GM12878 (cell line): ENCODE measurements at regions of chr1 and their contacts with region 1.

Region 1: GRCh38 chr1:40979233-40980067 is at the start of gene CTPS1:
- DNase-seq: peak; percentile 59
- ATAC-seq: peak; percentile 94
- H3K4me3 ChIP-seq: peak within 1 kb of the TSS; percentile 81
- H3K27ac ChIP-seq: peak within 1 kb of the TSS; percentile 81
- H3K4me1 ChIP-seq: peaks cover 4% of the 10 kb centered on the region; the same call in 1 of the 2 replicates
- H3K27me3 ChIP-seq: no peaks in the 10 kb centered on the region
- CTCF ChIP-seq: peak in 2 of 3 experiments; percentile 25 to 39; a peak in 2 of 6 replicates
- EP300 ChIP-seq: no peak
- POLR2A ChIP-seq: peak; percentile 91
- RAD21 ChIP-seq: no peak
- polyA plus RNA-seq, gene CTPS1: 44.8 to 50.9 TPM

Region 2: GRCh38 chr1:40932018-40932417 is 47.4 kb before region 1 on chr1:
- CTCF ChIA-PET with region 1: no interaction called
- POLR2A ChIA-PET with region 1: no interaction called
- RAD21 ChIA-PET with region 1: no interaction called
- SMC1A ChIA-PET with region 1: no interaction called
- in situ Hi-C with region 1: no loop called
- intact Hi-C with region 1: no loop called
- DNase-seq: no peak
- ATAC-seq: no peak
- H3K4me3 ChIP-seq: no peak overlapping the region
- H3K27ac ChIP-seq: no peak overlapping the region
- H3K4me1 ChIP-seq: no peaks in the 10 kb centered on the region
- H3K27me3 ChIP-seq: no peaks in the 10 kb centered on the region
- CTCF ChIP-seq: no peak
- EP300 ChIP-seq: no peak
- POLR2A ChIP-seq: no peak
- RAD21 ChIP-seq: no peak

Region 3: GRCh38 chr1:40997096-40997495 is 17.6 kb after region 1 on chr1:
- CTCF ChIA-PET with region 1: interaction called, 4 read pairs
- POLR2A ChIA-PET with region 1: interaction called, 3 read pairs
- RAD21 ChIA-PET with region 1: no interaction called
- SMC1A ChIA-PET with region 1: interaction called, 13 read pairs
- in situ Hi-C with region 1: no loop called
- intact Hi-C with region 1: no loop called
- DNase-seq: no peak
- ATAC-seq: no peak
- H3K4me3 ChIP-seq: no peak overlapping the region
- H3K27ac ChIP-seq: no peak overlapping the region
- H3K4me1 ChIP-seq: no peaks in the 10 kb centered on the region
- H3K27me3 ChIP-seq: no peaks in the 10 kb centered on the region
- CTCF ChIP-seq: no peak
- EP300 ChIP-seq: no peak
- POLR2A ChIP-seq: no peak
- RAD21 ChIP-seq: no peak

Region 4: DNA sequence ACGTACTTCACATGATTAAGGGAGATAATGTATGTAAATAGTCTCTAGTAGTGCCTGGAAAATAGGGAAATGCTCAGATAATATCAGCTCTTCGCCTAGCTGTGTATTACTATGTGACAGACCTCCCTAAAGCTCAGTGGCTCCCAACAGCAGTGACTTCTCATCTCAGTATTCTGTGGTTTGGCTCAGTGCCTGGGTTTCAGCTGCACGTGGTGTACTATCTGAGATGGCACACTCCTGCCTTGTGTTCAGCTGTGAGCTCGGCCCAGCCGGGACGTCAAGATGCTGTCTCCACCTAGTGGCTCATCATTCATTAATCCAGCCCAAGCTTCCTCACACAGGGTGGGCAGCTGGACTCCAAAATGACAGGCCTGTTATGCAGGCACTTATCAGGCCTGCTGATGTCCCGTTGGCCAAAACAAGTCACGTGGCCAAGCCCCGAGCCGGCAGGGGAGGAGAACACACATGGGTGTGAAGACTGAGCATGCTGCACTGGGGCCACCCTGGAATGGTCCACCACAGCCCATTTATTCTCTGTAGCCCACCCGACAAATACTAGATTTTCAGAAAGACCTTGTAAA is 24.3 kb after region 1 on chr1:
- CTCF ChIA-PET with region 1: interaction called, 9 read pairs
- POLR2A ChIA-PET with region 1: interaction called, 6 read pairs
- RAD21 ChIA-PET with region 1: interaction called, 19 read pairs
- SMC1A ChIA-PET with region 1: interaction called, 8 read pairs
- in situ Hi-C with region 1: no loop called
- intact Hi-C with region 1: no loop called
- DNase-seq: peak; percentile 95
- ATAC-seq: peak; percentile 99
- H3K4me3 ChIP-seq: no peak overlapping the region
- H3K27ac ChIP-seq: no peak overlapping the region
- H3K4me1 ChIP-seq: peaks cover 9% of the 10 kb centered on the region
- H3K27me3 ChIP-seq: no peaks in the 10 kb centered on the region
- CTCF ChIP-seq: peak; percentile 66 to 77 (median 74); a peak in 5 of 6 replicates
- EP300 ChIP-seq: peak; percentile 20 to 42; a peak in 1 of 4 replicates
- POLR2A ChIP-seq: peak; percentile 15; the same call in 1 of the 2 replicates
- RAD21 ChIP-seq: peak; percentile 47